Dendritic cell treated with granulocyte-macrophage colony-stimulating factor and Interleukin-4, amounts not matched to agents 40 ng/mL and 50 ng/mL, for 4 days (primary cell): ENCODE measurements at regions of chr14 and their contacts with region 1.

Region 1: DNA sequence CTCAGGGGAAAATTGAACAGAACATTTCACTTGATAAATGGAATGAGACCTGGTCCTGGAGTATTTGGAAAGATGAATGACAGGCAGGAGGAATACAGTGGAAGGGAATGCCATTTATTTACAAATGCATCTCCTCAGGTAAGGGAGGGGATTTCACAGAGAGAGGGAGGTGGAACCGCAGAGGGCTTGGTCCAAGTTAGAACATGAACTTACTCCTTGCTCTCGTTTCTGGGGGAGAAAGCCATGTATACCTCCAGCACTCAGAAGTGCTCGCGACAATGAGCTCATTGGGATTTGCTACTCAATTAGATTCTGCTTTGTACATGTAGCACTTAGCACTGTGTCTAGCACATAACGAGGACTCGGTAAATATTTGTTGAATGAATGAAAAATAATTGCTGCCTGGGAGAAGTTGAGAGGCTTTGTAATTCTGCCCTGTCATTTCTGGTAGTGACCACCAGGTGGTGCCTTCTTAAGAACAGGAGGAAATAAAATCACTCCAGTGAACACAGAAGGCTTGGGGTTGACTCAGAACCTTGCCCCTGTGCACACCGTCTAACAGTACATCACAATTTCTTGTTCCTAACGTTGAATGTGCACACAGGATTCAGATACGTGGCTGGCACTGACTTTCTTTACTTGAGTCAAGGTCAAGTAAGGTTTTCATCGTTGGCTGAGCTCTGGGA is 91.6 kb downstream of the RGS6 start:
- H3K4me3 Mint-ChIP-seq: no peak overlapping the region
- H3K27ac Mint-ChIP-seq: no peak overlapping the region
- H3K4me1 Mint-ChIP-seq: peaks cover 6% of the 10 kb centered on the region
- H3K27me3 Mint-ChIP-seq: peaks cover 5% of the 10 kb centered on the region

Region 2: GRCh38 chr14:72094844-72095582 is 71.1 kb after region 1 on chr14:
- intact Hi-C with region 1: no loop called
- H3K4me3 Mint-ChIP-seq: no peak overlapping the region
- H3K27ac Mint-ChIP-seq: no peak overlapping the region
- H3K4me1 Mint-ChIP-seq: no peaks in the 10 kb centered on the region
- H3K27me3 Mint-ChIP-seq: no peaks in the 10 kb centered on the region

Region 3: GRCh38 chr14:72291908-72292688 is 268.2 kb after region 1 on chr14:
- intact Hi-C with region 1: loop called (anchors 10 kb)
- H3K4me3 Mint-ChIP-seq: no peak overlapping the region
- H3K27ac Mint-ChIP-seq: no peak overlapping the region
- H3K4me1 Mint-ChIP-seq: no peaks in the 10 kb centered on the region
- H3K27me3 Mint-ChIP-seq: peaks cover 1% of the 10 kb centered on the region

Region 4: GRCh38 chr14:72420725-72421474 is 397.0 kb after region 1 on chr14:
- intact Hi-C with region 1: loop called (anchors 1 kb)
- H3K4me3 Mint-ChIP-seq: no peak overlapping the region
- H3K27ac Mint-ChIP-seq: no peak overlapping the region
- H3K4me1 Mint-ChIP-seq: no peaks in the 10 kb centered on the region
- H3K27me3 Mint-ChIP-seq: no peaks in the 10 kb centered on the region

Region 5: GRCh38 chr14:72904840-72905561 is 881.1 kb after region 1 on chr14:
- intact Hi-C with region 1: loop called (anchors 10 kb)
- H3K4me3 Mint-ChIP-seq: no peak overlapping the region
- H3K27ac Mint-ChIP-seq: no peak overlapping the region
- H3K4me1 Mint-ChIP-seq: no peaks in the 10 kb centered on the region
- H3K27me3 Mint-ChIP-seq: peaks cover 38% of the 10 kb centered on the region